BJ (cell line): ENCODE measurements at regions of chr2 and their contacts with region 1.

Region 1: DNA sequence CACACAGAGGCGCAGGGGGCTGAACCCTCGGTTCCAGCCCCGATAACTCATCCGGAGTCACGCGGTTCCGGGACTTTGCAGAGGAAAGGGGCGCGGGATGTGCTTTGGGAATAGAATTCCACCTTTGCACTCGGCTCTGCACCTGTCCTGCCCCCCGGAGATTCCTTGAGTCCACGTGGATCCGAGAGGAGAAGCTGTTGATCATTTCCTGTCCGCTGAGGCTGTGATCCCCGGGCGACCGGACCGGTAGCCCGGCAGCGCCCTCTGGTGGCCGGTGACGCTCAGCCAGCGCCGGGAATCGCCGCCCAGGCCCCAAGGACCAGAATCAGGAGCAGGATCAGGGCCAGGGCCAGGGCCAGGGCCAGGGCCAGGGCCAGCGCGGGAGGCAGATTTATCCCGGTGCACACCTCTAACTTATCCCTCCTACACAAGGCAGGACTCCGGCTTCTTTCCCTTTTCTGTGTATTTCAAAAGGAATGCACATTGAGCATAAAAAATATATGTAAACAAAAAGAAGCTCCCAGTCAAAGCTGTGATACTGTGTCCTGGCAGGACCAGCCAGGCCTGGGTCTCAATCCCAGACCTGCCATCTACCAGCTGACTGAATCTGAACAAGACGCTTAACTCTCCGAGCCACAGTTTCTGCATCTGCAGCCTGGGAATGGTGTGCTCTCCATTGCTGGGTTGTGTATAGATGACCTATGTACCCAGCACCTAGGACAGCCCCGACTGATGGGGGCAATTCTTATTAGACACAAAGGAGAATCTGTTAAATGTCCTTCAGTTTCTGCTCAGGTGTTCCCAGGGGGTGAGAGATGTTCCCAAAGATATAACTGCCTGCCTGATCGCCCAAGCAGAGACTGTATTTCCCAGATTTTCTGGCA is 8.5 kb upstream of the SPATA3 start:
- DNase-seq: no peak
- H3K4me3 ChIP-seq: peak overlapping the region; percentile 44
- H3K27me3 ChIP-seq: peaks cover 7% of the 10 kb centered on the region
- CTCF ChIP-seq: peak; percentile 93

Region 2: DNA sequence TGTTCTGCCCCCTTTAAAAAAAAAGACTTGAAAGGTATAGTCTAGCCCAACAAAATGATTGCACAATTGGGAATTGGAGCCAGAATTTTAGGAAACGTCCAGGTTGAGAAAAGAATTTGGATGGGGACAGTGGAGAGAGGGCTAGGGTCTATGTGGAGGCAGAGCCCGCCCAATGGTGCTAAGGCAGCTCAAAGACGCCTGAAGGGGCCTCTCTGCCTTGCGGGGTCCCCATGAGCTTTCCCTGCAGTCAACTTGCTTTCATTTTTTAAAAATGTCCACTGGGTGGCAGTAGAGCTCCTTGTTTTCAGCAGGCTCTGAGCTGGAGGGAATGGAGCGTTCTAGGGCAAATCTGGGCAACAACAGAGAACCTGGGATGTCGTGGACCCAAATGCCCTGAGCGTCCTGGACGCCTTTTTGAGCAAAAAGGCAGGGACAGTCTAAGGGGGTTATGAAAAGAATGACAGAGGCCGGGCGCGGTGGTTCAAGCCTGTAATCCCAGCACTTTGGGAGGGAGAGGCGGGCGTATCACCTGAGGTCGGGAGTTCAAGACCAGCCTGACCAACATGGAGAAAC is 162.9 kb before region 1 on chr2:
- CTCF ChIA-PET with region 1: interaction called, 87 read pairs
- POLR2A ChIA-PET with region 1: no interaction called
- DNase-seq: no peak
- H3K4me3 ChIP-seq: peak overlapping the region; percentile 1; the same call in 1 of the 2 replicates
- H3K27me3 ChIP-seq: peaks cover 4% of the 10 kb centered on the region; the same call in 1 of the 2 replicates
- CTCF ChIP-seq: peak; percentile 69

Region 3: GRCh38 chr2:230842473-230842872 is 144.9 kb before region 1 on chr2:
- CTCF ChIA-PET with region 1: interaction called, 37 read pairs
- POLR2A ChIA-PET with region 1: no interaction called
- DNase-seq: no peak
- H3K4me3 ChIP-seq: no peak overlapping the region
- H3K27me3 ChIP-seq: peaks cover 4% of the 10 kb centered on the region; the same call in 1 of the 2 replicates
- CTCF ChIP-seq: no peak

Region 4: GRCh38 chr2:230847883-230848388 is 139.4 kb before region 1 on chr2:
- CTCF ChIA-PET with region 1: interaction called, 37 read pairs
- POLR2A ChIA-PET with region 1: no interaction called
- DNase-seq: no peak
- H3K4me3 ChIP-seq: no peak overlapping the region
- H3K27me3 ChIP-seq: peaks cover 6% of the 10 kb centered on the region
- CTCF ChIP-seq: peak; percentile 98

Region 5: DNA sequence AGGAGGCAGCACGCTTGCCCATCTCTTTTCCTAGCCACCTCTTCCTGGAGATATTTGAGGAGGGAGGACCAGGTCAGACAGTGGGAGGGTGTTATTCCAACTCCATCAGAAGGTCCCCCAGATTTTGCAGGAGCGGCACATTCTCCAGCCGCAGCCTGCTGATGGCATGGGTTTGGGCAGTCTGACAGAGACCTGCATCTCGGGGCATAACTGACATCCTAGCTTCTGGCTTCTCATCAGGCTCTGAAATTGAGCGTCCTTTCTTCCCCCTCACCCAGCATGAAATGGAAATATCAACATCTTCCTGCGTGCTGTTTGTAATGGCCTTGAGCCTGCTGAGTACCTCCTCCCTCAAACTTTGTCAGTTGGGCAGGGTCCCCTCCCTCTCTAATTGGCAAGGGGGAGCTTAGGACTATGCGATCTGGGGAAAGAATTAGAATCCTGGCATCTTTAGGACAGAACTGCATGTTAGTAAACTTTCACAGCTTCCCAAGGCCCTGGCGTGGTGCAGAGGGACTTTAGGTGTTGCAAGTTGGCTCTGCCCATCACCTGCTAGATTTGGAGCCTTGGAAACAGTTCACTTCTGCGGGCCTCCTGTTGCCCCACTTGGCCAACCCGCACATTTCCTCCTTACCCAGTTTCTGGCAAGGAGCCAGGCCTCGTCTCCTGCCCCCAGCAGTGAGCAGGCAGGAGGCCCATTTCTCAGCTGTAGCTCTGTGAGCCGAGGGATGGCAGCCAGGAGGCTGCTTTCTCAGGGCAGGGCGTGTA is 120.4 kb before region 1 on chr2:
- CTCF ChIA-PET with region 1: interaction called, 13 read pairs
- POLR2A ChIA-PET with region 1: no interaction called
- DNase-seq: no peak
- H3K4me3 ChIP-seq: no peak overlapping the region
- H3K27me3 ChIP-seq: peaks cover 8% of the 10 kb centered on the region
- CTCF ChIP-seq: 0 out of 2 replicates have a peak, but pooled peaks have one; percentile 7

Region 6: GRCh38 chr2:230899287-230899686 is 88.1 kb before region 1 on chr2:
- CTCF ChIA-PET with region 1: interaction called, 25 read pairs
- POLR2A ChIA-PET with region 1: no interaction called
- DNase-seq: no peak
- H3K4me3 ChIP-seq: no peak overlapping the region
- H3K27me3 ChIP-seq: peaks cover 12% of the 10 kb centered on the region
- CTCF ChIP-seq: no peak

Region 7: DNA sequence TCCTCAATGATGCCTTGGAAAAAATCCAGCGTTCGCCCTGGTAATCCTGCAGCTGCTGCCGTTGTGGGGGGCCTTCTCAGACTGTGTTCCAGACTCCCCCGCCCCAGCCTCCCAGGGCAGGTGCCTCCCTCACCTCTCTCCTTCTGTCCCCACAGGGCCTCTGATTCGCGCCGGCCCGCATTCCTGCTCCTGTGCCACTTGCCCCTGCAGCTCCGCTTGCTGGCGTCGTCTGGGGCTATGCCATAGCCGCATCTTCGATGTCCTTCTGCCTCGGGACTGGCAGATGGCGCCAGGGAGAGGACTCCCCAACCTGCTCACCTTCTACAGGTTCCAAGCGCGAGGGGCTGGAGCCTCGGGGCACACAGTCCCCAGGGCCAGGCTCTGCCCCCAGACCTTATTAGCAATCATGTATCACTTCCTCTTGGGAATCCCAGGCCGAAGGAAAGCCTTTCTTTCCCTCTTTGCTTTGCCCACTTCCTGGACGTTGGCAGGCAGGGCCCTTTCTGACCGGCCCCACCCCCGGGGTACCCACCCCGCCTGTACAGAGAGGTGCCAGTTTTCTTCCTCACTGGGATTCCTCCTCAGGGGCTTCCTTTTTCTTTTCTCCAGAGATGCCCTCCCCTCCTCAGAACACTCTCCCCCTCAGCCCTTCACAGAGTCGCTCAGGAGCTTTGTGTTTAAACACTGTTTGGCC is 13.0 kb after region 1 on chr2:
- CTCF ChIA-PET with region 1: interaction called, 10 read pairs
- POLR2A ChIA-PET with region 1: no interaction called
- DNase-seq: no peak
- H3K4me3 ChIP-seq: no peak overlapping the region
- H3K27me3 ChIP-seq: peaks cover 4% of the 10 kb centered on the region
- CTCF ChIP-seq: no peak

Region 8: DNA sequence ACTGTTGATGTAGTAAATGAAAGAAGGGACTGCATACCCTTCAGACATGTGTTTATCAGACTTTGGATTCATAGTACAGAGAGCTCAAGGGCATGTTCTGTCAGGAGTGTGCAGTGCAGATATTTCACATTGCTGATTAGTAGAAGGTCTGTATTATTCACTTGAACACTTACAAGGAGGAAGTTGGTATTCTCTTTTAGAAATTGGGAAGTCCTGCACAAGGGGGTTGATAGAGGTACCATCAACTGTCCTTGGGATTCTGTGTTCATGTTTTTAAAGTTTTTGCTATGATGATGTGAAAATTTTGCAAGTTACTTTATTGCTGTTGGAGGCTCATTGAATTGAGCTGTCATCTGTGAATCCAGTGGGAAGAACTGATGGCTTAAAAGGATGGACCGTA is 76.0 kb after region 1 on chr2:
- CTCF ChIA-PET with region 1: no interaction called
- POLR2A ChIA-PET with region 1: no interaction called
- DNase-seq: no peak
- H3K4me3 ChIP-seq: no peak overlapping the region
- H3K27me3 ChIP-seq: no peaks in the 10 kb centered on the region
- CTCF ChIP-seq: no peak